ENCODE measurements at regions of chr1 and their contacts with region 1.

Region 1: DNA sequence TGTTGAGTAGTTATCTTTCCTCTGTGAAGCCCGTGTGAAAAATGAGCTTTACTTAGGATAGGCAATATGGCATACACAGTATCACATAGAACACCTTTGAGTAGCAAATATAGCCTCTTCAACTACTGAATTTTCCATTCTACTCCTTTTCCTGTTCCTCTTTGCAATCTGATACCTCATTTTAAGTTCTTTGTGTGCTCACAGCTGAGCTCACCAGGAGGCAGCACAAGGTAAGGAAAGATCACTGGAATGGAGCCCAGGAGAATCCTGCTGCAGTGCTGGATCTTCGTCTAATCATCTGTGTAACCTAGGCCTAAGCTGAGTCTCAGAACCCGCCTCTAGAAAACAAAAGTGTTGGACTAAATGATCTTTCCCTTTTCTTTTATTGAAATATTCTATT is 171.0 kb downstream of the LRRC40 start:
- DNase-seq: peak; percentile 77
- ATAC-seq: peak; percentile 79
- H3K4me3 ChIP-seq: no peak overlapping the region
- H3K27ac ChIP-seq: no peak overlapping the region
- H3K4me1 ChIP-seq: no peaks in the 10 kb centered on the region
- H3K27me3 ChIP-seq: no peaks in the 10 kb centered on the region; the same call in 1 of the 2 replicates
- CTCF ChIP-seq: peak; percentile 67
- POLR2A ChIP-seq: no peak
- RAD21 ChIP-seq: peak; percentile 77

Region 2: DNA sequence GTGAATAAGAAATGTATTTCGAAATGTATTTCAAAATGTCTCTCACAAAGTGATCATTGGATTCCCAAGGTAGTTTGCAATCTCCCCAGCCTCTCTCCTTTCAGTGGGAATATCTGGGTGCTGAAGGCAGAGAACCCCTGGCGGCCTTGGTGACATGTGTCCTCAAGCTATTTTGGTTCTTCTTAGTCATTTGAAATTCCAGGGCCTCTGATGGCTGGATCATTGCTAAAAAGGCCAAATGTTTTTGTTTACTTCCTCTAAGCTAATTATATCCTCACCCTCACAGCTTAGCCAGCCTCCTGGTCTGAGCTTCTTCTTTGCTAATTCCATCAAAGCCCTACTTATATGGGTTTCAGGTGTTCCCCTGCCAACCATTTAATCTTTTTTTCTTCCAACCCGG is 99.7 kb after region 1 on chr1:
- CTCF ChIA-PET with region 1: no interaction called
- POLR2A ChIA-PET with region 1: no interaction called
- dilution Hi-C with region 1: no loop called
- in situ Hi-C with region 1: loop called (anchors 25 kb)
- intact Hi-C with region 1: loop called (anchors 2 kb)
- DNase-seq: no peak
- ATAC-seq: no peak
- H3K4me3 ChIP-seq: no peak overlapping the region
- H3K27ac ChIP-seq: no peak overlapping the region
- H3K4me1 ChIP-seq: no peaks in the 10 kb centered on the region
- H3K27me3 ChIP-seq: no peaks in the 10 kb centered on the region; the same call in 1 of the 2 replicates
- CTCF ChIP-seq: no peak
- POLR2A ChIP-seq: no peak
- RAD21 ChIP-seq: no peak

Region 3: GRCh38 chr1:70142075-70142474 is 107.7 kb after region 1 on chr1:
- CTCF ChIA-PET with region 1: interaction called, 7 read pairs
- POLR2A ChIA-PET with region 1: no interaction called
- dilution Hi-C with region 1: no loop called
- in situ Hi-C with region 1: loop called (anchors 25 kb)
- intact Hi-C with region 1: loop called (anchors 2 kb)
- DNase-seq: peak; percentile 45
- ATAC-seq: peak; percentile 55
- H3K4me3 ChIP-seq: no peak overlapping the region
- H3K27ac ChIP-seq: no peak overlapping the region
- H3K4me1 ChIP-seq: no peaks in the 10 kb centered on the region; the same call in 1 of the 2 replicates
- H3K27me3 ChIP-seq: no peaks in the 10 kb centered on the region
- CTCF ChIP-seq: peak; percentile 43
- POLR2A ChIP-seq: no peak
- RAD21 ChIP-seq: peak; percentile 37

Region 4: GRCh38 chr1:70221241-70222121 is 187.1 kb after region 1 on chr1 and contains the start of gene SRSF11:
- CTCF ChIA-PET with region 1: no interaction called
- POLR2A ChIA-PET with region 1: no interaction called
- dilution Hi-C with region 1: no loop called
- in situ Hi-C with region 1: no loop called
- intact Hi-C with region 1: loop called (anchors 10 kb)
- DNase-seq: peak; percentile 91
- ATAC-seq: peak; percentile 99
- H3K4me3 ChIP-seq: peak within 1 kb of the TSS; percentile 97
- H3K27ac ChIP-seq: peak within 1 kb of the TSS; percentile 98
- H3K4me1 ChIP-seq: peaks cover 2% of the 10 kb centered on the region
- H3K27me3 ChIP-seq: no peaks in the 10 kb centered on the region
- CTCF ChIP-seq: no peak
- POLR2A ChIP-seq: peak; percentile 76
- RAD21 ChIP-seq: no peak
- total RNA-seq, gene SRSF11: 94.5 and 116 TPM in 2 replicates

Region 5: DNA sequence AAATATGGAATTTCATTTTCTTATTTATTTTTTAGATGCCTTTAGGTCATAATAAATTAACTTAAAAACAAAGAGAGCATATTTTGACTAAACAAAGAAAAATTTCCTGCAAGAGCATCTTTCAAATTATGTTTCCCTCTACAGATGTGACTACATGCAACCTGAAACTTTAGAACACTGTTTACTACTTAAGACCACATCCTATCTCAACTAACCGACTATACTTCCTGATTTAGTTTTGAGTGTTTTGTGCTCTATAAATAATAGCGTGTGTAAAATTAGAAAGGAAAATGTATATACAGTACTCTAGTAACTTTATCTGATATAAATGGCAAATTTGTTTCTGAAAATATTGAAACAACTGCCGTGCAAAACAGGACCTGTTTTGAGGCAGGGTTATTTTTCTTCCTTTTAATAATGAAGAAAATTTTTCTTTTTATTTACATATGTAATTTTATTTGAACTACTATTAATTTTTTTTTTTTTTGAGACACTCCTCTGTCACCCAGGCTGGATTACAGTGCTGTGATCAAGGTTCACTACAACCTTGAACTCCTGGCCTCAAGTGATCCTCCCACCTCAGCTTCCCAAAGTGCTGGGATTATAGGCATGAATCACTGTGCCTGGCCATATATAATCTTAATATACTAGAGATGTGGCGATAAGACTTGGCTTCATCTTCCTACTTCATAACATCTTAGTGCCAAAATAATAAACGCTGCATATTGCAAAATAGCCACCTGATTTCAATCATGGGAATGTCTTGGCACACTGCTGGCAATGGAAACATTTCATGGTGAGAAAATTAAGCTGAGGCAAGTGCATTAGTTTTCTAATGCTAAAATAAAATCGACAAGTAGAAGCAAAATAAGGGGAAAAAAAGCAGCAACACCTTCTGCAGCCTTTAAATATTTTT is 1034.2 kb after region 1 on chr1:
- CTCF ChIA-PET with region 1: no interaction called
- POLR2A ChIA-PET with region 1: no interaction called
- dilution Hi-C with region 1: no loop called
- in situ Hi-C with region 1: no loop called
- intact Hi-C with region 1: no loop called
- DNase-seq: no peak
- ATAC-seq: no peak
- H3K4me3 ChIP-seq: no peak overlapping the region
- H3K27ac ChIP-seq: no peak overlapping the region
- H3K4me1 ChIP-seq: no peaks in the 10 kb centered on the region
- H3K27me3 ChIP-seq: no peaks in the 10 kb centered on the region
- CTCF ChIP-seq: no peak
- POLR2A ChIP-seq: no peak
- RAD21 ChIP-seq: no peak

Measured in IMR-90 (cell line).